Ovary (tissue), 10 donors: ENCODE measurements at regions of chr15 and their contacts with region 1.

Region 1: GRCh38 chr15:53644681-53645080 is 114.8 kb downstream of the WDR72 start:
- DNase-seq: no peak
- H3K4me3 ChIP-seq: no peak overlapping the region
- H3K27ac ChIP-seq: no peak overlapping the region
- H3K4me1 ChIP-seq: no peaks in the 10 kb centered on the region
- H3K27me3 ChIP-seq: no peaks in the 10 kb centered on the region
- CTCF ChIP-seq: no peak
- EP300 ChIP-seq: no peak
- POLR2A ChIP-seq: no peak

Region 2: GRCh38 chr15:53367740-53368139 is 276.9 kb before region 1 on chr15:
- intact Hi-C with region 1: no loop called
- DNase-seq: no peak
- H3K4me3 ChIP-seq: no peak overlapping the region
- H3K27ac ChIP-seq: no peak overlapping the region
- H3K4me1 ChIP-seq: no peaks in the 10 kb centered on the region
- H3K27me3 ChIP-seq: no peaks in the 10 kb centered on the region
- CTCF ChIP-seq: no peak
- EP300 ChIP-seq: no peak
- POLR2A ChIP-seq: no peak

Region 3: GRCh38 chr15:54374184-54374952 is 729.7 kb after region 1 on chr15:
- intact Hi-C with region 1: loop called in 1 of 4 experiments (anchors 5 kb)
- DNase-seq: no peak
- H3K4me3 ChIP-seq: no peak overlapping the region
- H3K27ac ChIP-seq: no peak overlapping the region
- H3K4me1 ChIP-seq: no peaks in the 10 kb centered on the region
- H3K27me3 ChIP-seq: peaks cover 3% of the 10 kb centered on the region
- CTCF ChIP-seq: no peak
- EP300 ChIP-seq: no peak
- POLR2A ChIP-seq: no peak